MCF 10A (cell line): ENCODE measurements at regions of chr13 and their contacts with region 1.

Region 1: DNA sequence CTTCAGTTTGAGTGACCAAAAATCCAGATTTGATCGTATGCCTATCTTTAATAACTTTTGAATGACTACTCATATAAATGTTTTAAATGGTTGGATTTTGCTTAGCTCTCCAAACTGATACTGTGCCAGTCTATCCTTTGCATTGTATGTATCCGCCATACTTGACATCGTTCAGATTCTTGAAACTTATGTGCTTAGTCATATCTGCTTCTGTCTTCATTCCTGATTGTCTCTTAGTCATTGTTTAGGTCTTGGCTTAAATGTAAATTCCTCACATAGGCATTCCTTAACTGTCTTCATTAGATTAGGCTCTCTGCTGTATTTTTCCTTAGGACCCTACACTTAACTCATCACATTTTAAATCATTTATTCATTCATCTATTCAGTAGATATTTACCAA is 126.0 kb downstream of the PCCA start:
- DNase-seq: peak; percentile 69
- H3K4me3 Mint-ChIP-seq: no peak overlapping the region
- H3K27ac Mint-ChIP-seq: peak overlapping the region; percentile 14
- H3K4me1 Mint-ChIP-seq: peaks cover 42% of the 10 kb centered on the region
- H3K27me3 Mint-ChIP-seq: no peaks in the 10 kb centered on the region
- CTCF ChIP-seq: no peak

Region 2: DNA sequence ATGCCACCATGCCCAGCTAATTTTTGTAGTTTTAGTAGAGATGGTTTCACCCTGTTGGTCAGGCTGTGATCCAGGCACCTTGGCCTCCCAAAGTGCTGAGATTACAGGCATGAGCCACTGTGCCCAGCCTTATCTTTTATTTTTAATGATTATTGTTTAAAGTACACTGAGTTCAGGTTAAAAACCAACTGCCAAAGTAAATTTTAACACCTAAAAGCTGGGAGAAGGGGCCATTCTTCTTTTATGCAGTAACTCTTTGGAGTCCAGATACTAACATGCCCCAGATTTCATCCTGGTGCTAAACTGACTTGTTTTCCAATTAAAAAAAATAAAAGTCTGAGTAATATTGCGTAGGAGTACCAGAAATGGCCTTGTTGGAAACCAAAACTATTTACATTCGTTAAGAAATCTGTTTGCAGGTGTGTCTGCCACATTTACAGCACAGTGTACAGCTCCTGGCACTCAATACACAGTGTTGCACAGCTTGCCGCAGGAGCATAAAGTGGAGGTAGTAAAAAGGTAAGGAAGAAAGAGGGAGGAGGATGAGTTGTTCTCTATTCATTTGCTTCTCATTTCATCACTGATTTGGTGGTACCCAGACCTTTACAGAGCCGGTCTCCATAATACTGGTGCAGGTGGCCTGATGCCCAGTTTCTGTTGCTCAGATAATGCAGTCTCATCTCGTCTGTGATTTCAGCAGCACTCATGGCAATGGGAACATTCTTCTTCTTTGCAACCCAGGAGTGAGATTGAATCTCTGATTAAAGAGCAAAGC is 17.1 kb before region 1 on chr13:
- CTCF ChIA-PET with region 1: interaction called, 3 read pairs
- POLR2A ChIA-PET with region 1: interaction called, 10 read pairs
- intact Hi-C with region 1: no loop called
- DNase-seq: peak; percentile 64
- H3K4me3 Mint-ChIP-seq: peak overlapping the region; percentile 26
- H3K27ac Mint-ChIP-seq: peak overlapping the region; percentile 16
- H3K4me1 Mint-ChIP-seq: peaks cover 7% of the 10 kb centered on the region
- H3K27me3 Mint-ChIP-seq: no peaks in the 10 kb centered on the region
- CTCF ChIP-seq: no peak

Region 3: GRCh38 chr13:100269837-100270236 is 55.0 kb after region 1 on chr13:
- CTCF ChIA-PET with region 1: no interaction called
- POLR2A ChIA-PET with region 1: no interaction called
- intact Hi-C with region 1: no loop called
- DNase-seq: peak; percentile 75
- H3K4me3 Mint-ChIP-seq: no peak overlapping the region
- H3K27ac Mint-ChIP-seq: no peak overlapping the region
- H3K4me1 Mint-ChIP-seq: peaks cover 7% of the 10 kb centered on the region
- H3K27me3 Mint-ChIP-seq: no peaks in the 10 kb centered on the region
- CTCF ChIP-seq: no peak